ENCODE measurements at regions of chr16 and their contacts with region 1.

Region 1: GRCh38 chr16:75238132-75238852 is 13.1 kb downstream of the BCAR1 start:
- DNase-seq: no peak
- ATAC-seq: peak; percentile 81

Region 2: GRCh38 chr16:75251280-75252048 is 13.2 kb after region 1 on chr16 and contains the start of gene BCAR1:
- intact Hi-C with region 1: loop called (anchors 1 kb)
- DNase-seq: peak; percentile 94
- ATAC-seq: peak; percentile 89
- total RNA-seq, gene BCAR1: 76.7 TPM

Region 3: DNA sequence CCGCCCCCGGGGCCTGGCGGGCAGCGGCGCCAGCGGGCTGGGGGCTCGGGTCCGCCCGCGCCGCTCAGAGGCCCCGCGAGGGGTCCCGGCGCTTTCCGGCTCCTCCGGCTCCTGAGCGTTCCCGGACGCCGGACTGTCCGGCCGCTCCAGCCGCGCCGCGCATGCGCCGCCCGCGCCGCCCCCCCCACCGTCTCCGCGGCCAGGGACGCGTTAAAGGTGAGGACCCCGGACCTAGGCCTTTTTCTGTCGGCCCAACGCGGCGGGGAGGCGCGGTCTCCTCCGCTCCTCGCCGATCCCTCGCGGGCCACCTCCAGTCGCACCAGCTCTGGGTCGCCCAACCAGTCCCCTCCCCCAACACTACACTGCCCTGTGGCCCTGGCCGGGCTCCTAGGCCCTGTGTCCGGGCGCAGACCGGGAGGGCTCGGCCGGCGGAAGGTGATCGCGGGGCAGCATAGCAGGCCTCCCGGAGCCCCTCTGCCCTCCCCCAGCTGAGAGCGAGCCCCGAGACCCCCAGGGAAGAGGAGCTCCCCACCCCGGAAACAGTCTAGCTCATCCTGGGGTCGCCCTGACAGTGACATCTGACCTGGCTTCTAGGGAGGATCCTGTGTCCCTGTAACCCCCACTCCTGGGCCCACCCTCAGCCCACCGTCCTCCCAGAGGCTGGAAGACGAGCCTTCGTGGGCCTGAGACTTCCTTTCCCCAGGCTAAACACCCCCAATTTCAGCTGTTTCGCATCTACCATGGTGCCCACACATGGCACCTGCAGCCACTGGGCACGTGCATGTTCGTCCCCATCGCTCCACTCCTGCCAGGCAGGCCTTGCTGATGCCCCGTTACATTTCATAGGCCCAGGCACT is 27.8 kb after region 1 on chr16:
- intact Hi-C with region 1: loop called (anchors 2 kb)
- DNase-seq: no peak
- ATAC-seq: peak; percentile 47

Region 4: DNA sequence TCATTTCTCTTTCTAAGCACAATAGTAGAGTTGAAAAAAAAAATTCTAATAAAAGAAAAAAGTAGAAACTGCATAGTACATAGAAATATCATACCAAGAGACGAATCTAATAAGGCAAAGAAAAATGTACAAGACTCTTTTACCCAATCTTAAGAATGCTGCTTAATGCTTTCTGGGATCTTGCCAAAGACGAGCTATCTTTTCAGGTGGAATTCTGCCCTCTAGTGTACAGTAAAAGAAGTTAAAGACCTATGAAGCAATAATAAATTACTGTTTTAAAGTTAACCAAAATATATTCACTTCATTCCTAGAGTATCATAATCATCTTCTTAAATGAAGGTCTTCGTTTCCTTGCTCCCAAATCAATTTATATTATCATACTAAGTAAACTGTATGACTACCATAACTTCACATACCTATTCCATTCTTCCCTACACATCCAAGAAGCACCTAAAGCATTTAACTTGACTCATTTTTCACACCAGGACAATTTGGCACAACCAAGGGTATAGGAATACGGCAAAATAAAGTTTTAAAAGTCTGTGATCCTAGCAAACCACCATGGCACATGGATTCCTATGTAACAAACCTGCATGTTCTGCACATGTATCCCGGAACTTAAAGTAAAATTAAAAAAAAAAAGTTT is 147.3 kb after region 1 on chr16:
- intact Hi-C with region 1: loop called (anchors 2 kb)
- DNase-seq: no peak
- ATAC-seq: no peak

Measured in Right ventricle myocardium inferior (tissue), 1 donor.